ENCODE measurements at regions of chr6 and their contacts with region 1.

Region 1: GRCh38 chr6:43769526-43770416 is at the start of gene VEGFA:
- DNase-seq: peak; percentile 95
- ATAC-seq: peak; percentile 73
- total RNA-seq, gene VEGFA: 261 TPM

Region 2: GRCh38 chr6:43980004-43980795 is 210.4 kb after region 1 on chr6:
- intact Hi-C with region 1: no loop called
- DNase-seq: no peak
- ATAC-seq: no peak

Region 3: DNA sequence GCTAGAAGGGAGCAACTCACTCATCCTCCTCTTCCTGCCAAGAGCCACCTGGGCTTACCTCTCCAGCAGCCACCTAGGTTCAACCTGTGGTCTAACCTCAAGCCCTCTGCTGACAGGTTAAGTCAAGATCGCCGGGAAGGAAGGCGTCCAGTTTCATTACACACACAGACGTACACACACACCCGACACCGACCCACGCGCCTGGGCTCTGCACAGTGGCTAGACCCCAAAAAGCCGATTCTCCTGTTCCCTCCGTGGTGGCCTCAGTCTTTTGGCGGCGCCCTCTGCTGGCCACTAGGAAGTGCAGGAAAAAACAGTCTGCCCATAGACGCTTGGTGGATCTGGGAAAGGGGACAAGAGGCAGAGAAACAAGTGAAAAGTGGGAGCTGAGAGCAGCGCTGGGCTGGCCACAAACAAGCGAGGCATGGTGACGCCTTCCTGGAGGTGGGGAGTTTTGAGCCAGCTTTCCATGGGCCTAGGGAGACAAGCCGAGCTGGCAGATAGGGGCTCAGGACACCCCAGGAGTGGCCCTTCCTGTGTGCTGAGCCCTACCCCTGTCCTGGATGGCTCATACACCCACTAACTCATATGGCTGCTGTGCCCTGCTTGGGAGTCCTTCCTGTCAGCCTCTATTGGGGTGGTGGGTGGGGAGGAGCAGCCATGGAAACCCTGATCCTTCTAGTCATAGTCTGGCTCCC is 304.8 kb after region 1 on chr6:
- intact Hi-C with region 1: loop called (anchors 5 kb)
- DNase-seq: peak; percentile 89
- ATAC-seq: peak; percentile 69

Measured in left ventricle myocardium superior (tissue), 1 donor.